ENCODE measurements at regions of chr2 and their contacts with region 1.

Region 1: GRCh38 chr2:10812362-10813162 is at the start of gene PDIA6:
- DNase-seq: peak; percentile 87 to 96 (median 90)
- ATAC-seq: peak; percentile 95
- H3K4me3 ChIP-seq: peak within 1 kb of the TSS; percentile 73
- H3K4me3 Mint-ChIP-seq: peak within 1 kb of the TSS; percentile 87 to 95 (median 91)
- H3K27ac ChIP-seq: peak within 1 kb of the TSS; percentile 86
- H3K27ac Mint-ChIP-seq: peak within 1 kb of the TSS; percentile 77 to 96 (median 84)
- H3K4me1 ChIP-seq: peaks cover 14 to 15% of the 10 kb centered on the region in 2 donors
- H3K4me1 Mint-ChIP-seq: peaks cover 28 to 44% (median 39%) of the 10 kb centered on the region in 7 donors
- H3K27me3 ChIP-seq: no peaks in the 10 kb centered on the region
- H3K27me3 Mint-ChIP-seq: peaks cover 0 to 15% (median 0%) of the 10 kb centered on the region in 5 donors
- total RNA-seq, gene PDIA6: 24.3 to 173 (median 46.8) TPM

Region 2: GRCh38 chr2:8836971-8837794 is 1975.4 kb before region 1 on chr2 and contains the start of gene KIDINS220:
- CTCF ChIA-PET with region 1: no interaction called
- POLR2A ChIA-PET with region 1: no interaction called
- intact Hi-C with region 1: loop called in 1 of 2 experiments (anchors 2 kb)
- DNase-seq: peak; percentile 71 to 87 (median 82)
- ATAC-seq: peak; percentile 99
- H3K4me3 ChIP-seq: peak within 1 kb of the TSS; percentile 69
- H3K4me3 Mint-ChIP-seq: peak within 1 kb of the TSS; percentile 96 to 100 (median 99)
- H3K27ac ChIP-seq: peak within 1 kb of the TSS; percentile 78
- H3K27ac Mint-ChIP-seq: peak within 1 kb of the TSS; percentile 94 to 100 (median 98)
- H3K4me1 ChIP-seq: peaks cover 23 to 29% of the 10 kb centered on the region in 2 donors
- H3K4me1 Mint-ChIP-seq: peaks cover 26 to 60% (median 51%) of the 10 kb centered on the region in 7 donors
- H3K27me3 ChIP-seq: no peaks in the 10 kb centered on the region
- H3K27me3 Mint-ChIP-seq: peaks cover 0 to 5% (median 0%) of the 10 kb centered on the region in 5 donors
- total RNA-seq, gene KIDINS220: 34.5 to 54.3 (median 48.3) TPM

Region 3: DNA sequence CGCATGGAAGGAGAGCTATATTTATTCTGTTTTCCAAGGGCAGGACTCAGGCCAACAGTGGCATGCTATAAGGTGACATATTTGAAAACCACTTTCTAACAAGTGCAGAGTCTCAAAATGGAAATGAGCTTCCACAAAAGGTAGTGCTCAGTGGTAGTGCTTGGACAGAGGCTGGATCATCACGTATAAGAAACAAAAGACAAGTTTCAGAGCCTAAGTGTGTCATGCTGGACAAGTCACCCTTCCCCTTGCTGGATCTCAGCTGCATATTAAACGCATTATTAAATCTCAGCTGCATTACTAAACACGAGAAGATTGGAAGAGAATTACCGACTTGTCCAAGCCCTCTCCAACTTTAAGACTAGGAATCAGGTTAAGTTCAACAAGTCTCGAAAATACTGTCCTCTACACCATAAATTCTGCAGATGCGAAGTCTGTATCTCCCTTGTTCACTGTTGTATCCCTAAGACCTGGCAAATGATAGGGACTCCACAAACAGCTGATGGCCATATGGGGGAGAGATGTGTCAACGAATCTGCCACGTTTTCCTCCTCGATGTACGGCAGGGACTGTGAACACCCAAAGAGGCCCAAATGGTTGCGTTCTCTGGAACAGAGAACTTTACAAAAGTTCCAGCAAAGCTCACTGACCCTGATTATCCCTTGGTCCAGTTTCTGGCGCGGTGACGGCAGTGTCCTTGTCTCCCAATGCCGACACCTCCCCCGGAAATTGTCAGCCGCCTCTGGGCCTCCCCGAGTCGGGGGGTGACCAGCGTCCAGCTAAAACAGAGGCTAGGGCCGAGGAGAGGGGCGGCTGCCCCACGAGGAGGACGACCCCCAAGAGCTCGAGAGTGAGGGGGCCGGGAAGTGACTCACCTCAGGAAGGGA is 123.4 kb before region 1 on chr2:
- CTCF ChIA-PET with region 1: no interaction called
- POLR2A ChIA-PET with region 1: no interaction called
- intact Hi-C with region 1: loop called (anchors 5 kb)
- DNase-seq: peak in 2 of 9 donors; percentile 6 to 8
- ATAC-seq: peak; percentile 15
- H3K4me3 ChIP-seq: peak overlapping the region; percentile 92
- H3K4me3 Mint-ChIP-seq: no peak overlapping the region
- H3K27ac ChIP-seq: peak overlapping the region; percentile 84
- H3K27ac Mint-ChIP-seq: no peak overlapping the region
- H3K4me1 ChIP-seq: peaks cover 13 to 16% of the 10 kb centered on the region in 2 donors
- H3K4me1 Mint-ChIP-seq: peaks cover 3 to 14% (median 6%) of the 10 kb centered on the region in 7 donors
- H3K27me3 ChIP-seq: no peaks in the 10 kb centered on the region
- H3K27me3 Mint-ChIP-seq: peaks cover 0 to 2% (median 0%) of the 10 kb centered on the region in 5 donors

Region 4: GRCh38 chr2:11344342-11344955 is 531.9 kb after region 1 on chr2 and contains the start of gene ROCK2:
- CTCF ChIA-PET with region 1: no interaction called
- POLR2A ChIA-PET with region 1: no interaction called
- intact Hi-C with region 1: loop called (anchors 2 kb)
- DNase-seq: peak; percentile 45 to 81 (median 58)
- ATAC-seq: peak; percentile 82
- H3K4me3 ChIP-seq: peak within 1 kb of the TSS; percentile 87
- H3K4me3 Mint-ChIP-seq: peak within 1 kb of the TSS; percentile 93 to 100 (median 98)
- H3K27ac ChIP-seq: peak within 1 kb of the TSS; percentile 76
- H3K27ac Mint-ChIP-seq: peak within 1 kb of the TSS; percentile 87 to 96 (median 91)
- H3K4me1 ChIP-seq: peaks cover 13% of the 10 kb centered on the region in 2 donors
- H3K4me1 Mint-ChIP-seq: peaks cover 18 to 43% (median 33%) of the 10 kb centered on the region in 7 donors
- H3K27me3 ChIP-seq: no peaks in the 10 kb centered on the region
- H3K27me3 Mint-ChIP-seq: peaks cover 0 to 25% (median 0%) of the 10 kb centered on the region in 5 donors
- total RNA-seq, gene ROCK2: 12.0 to 23.9 (median 18.8) TPM

Region 5: DNA sequence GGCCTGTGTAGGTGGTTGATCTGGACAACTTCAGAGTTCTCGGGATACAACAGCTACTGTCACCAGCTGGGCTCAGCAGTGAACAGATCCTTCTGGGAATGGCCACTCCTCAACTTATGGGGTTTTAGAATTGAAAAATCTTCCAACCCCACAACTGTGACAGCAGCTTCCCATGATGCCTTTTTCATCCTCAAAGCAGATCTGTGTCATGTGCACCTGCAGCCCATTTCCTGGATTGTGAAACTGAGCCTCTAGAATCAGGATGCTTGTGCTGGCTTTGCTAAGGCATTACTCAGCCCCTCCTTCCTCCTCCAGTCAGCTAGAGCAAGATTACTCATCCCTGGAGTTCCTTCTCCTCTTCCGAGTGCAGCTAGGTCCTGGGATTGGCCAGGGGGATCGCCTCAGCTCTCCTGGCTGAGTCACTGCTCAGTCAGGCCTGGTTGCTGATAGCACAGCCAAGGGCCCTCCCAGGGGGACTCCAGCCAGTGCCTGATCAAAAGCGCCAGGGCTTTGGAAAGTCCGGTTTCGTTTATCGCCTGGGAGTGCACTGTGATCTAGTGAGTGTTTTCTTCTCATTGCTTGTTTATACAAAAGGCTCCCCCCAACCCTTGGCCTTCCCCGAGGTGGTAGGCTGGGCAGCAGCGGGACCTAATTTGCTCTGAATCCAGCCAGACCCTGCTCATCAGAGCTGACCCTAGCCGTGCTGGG is 931.4 kb after region 1 on chr2:
- CTCF ChIA-PET with region 1: no interaction called
- POLR2A ChIA-PET with region 1: no interaction called
- intact Hi-C with region 1: loop called in 1 of 2 experiments (anchors 2 kb)
- DNase-seq: peak in 1 of 9 donors; percentile 80
- ATAC-seq: peak; percentile 64
- H3K4me3 ChIP-seq: peak overlapping the region; percentile 35
- H3K4me3 Mint-ChIP-seq: peak overlapping the region in 7 of 10 donors; percentile 38 to 81 (median 65)
- H3K27ac ChIP-seq: no peak overlapping the region
- H3K27ac Mint-ChIP-seq: peak overlapping the region in 4 of 9 donors; percentile 22 to 97 (median 62)
- H3K4me1 ChIP-seq: peaks cover 33 to 41% of the 10 kb centered on the region in 2 donors
- H3K4me1 Mint-ChIP-seq: peaks cover 18 to 50% (median 45%) of the 10 kb centered on the region in 7 donors
- H3K27me3 ChIP-seq: no peaks in the 10 kb centered on the region
- H3K27me3 Mint-ChIP-seq: no peaks in the 10 kb centered on the region